Activated CD4-positive, alpha-beta T cell treated with anti-CD3 and anti-CD28 coated beads, Interleukin-2, amount 10 ng/mL, durations not matched to agents 7 days and 5 days (primary cell): ENCODE measurements at regions of chr7 and their contacts with region 1.

Region 1: DNA sequence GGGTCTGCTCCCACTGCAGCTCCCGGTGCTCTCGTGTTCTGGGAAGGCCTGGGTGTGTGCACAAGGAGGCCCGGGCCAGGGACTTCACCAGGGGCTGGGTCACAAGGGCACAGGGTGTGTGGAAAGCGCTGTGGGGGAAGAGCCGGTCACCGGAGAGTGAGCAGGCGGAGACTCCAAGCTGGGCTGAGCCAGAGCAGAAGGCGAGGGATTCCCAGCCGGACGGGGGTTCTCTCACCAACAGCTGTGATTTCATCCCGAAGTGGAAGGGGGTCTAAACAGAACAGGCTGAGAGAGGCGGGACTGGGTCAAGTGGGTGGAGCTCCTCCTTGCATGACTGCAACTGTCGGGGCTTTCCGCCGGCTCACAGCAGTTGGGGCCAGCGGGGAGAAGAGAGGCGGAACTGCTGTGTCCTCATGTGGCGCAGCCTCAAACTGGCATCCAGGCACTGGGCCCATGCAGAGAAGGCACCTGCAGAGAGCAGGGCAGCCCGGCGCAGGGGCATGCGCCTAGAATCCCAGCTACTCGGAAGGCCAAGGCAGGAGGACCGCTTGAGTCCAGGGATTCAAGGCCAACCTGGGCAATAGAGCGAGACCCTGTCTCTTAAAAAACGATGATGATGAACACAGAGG is 7.6 kb upstream of the ORAI2 start:
- DNase-seq: peak; percentile 80
- H3K4me3 Mint-ChIP-seq: peak overlapping the region; percentile 81
- H3K27ac Mint-ChIP-seq: peak overlapping the region; percentile 100
- H3K4me1 Mint-ChIP-seq: peaks cover 80% of the 10 kb centered on the region
- H3K27me3 Mint-ChIP-seq: no peaks in the 10 kb centered on the region

Region 2: GRCh38 chr7:102404005-102404861 is 21.5 kb before region 1 on chr7:
- CTCF ChIA-PET with region 1: interaction called, 11 read pairs
- POLR2A ChIA-PET with region 1: no interaction called
- DNase-seq: peak; percentile 57
- H3K4me3 Mint-ChIP-seq: no peak overlapping the region
- H3K27ac Mint-ChIP-seq: peak overlapping the region; percentile 61
- H3K4me1 Mint-ChIP-seq: peaks cover 9% of the 10 kb centered on the region
- H3K27me3 Mint-ChIP-seq: no peaks in the 10 kb centered on the region

Region 3: GRCh38 chr7:102456327-102456726 is 30.6 kb after region 1 on chr7:
- CTCF ChIA-PET with region 1: no interaction called
- POLR2A ChIA-PET with region 1: no interaction called
- DNase-seq: no peak
- H3K4me3 Mint-ChIP-seq: no peak overlapping the region
- H3K27ac Mint-ChIP-seq: no peak overlapping the region
- H3K4me1 Mint-ChIP-seq: no peaks in the 10 kb centered on the region
- H3K27me3 Mint-ChIP-seq: no peaks in the 10 kb centered on the region